ENCODE measurements at regions of chr4 and their contacts with region 1.

Region 1: GRCh38 chr4:142846729-142847596 is 862 bp upstream of the INPP4B start:
- DNase-seq: peak; percentile 89
- ATAC-seq: peak; percentile 82
- H3K4me3 Mint-ChIP-seq: peak overlapping the region; percentile 91
- H3K27ac Mint-ChIP-seq: peak overlapping the region; percentile 85
- H3K4me1 Mint-ChIP-seq: peaks cover 17% of the 10 kb centered on the region
- H3K27me3 Mint-ChIP-seq: peaks cover 6% of the 10 kb centered on the region

Region 2: GRCh38 chr4:141158219-141158618 is 1688.7 kb before region 1 on chr4:
- CTCF ChIA-PET with region 1: no interaction called
- POLR2A ChIA-PET with region 1: no interaction called
- intact Hi-C with region 1: loop called in 1 of 2 experiments (anchors 2 kb)
- DNase-seq: no peak
- ATAC-seq: no peak
- H3K4me3 Mint-ChIP-seq: no peak overlapping the region
- H3K27ac Mint-ChIP-seq: no peak overlapping the region
- H3K4me1 Mint-ChIP-seq: no peaks in the 10 kb centered on the region
- H3K27me3 Mint-ChIP-seq: peaks cover 3% of the 10 kb centered on the region

Region 3: DNA sequence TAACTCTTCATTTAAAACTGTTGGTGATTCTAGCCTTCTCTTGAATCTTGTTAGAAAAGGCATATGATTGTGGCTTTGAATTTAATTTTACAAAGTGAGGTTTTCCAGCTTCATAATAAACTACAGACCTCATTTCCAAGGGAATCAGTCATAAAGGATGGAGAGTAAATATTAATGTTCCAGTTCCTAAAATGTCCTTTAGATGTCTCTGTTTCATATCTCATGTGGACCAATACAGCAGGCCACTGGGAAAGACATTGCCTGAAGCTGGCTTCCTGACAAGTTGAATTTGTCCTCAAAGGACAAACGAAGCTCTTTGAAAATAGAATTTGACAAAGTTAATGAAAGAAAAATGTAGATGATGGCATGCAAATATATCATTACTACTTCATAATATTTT is 1500.8 kb before region 1 on chr4:
- CTCF ChIA-PET with region 1: no interaction called
- POLR2A ChIA-PET with region 1: no interaction called
- intact Hi-C with region 1: loop called (anchors 5 kb)
- DNase-seq: no peak
- ATAC-seq: no peak
- H3K4me3 Mint-ChIP-seq: no peak overlapping the region
- H3K27ac Mint-ChIP-seq: no peak overlapping the region
- H3K4me1 Mint-ChIP-seq: no peaks in the 10 kb centered on the region
- H3K27me3 Mint-ChIP-seq: peaks cover 12% of the 10 kb centered on the region

Region 4: GRCh38 chr4:141860974-141861373 is 986.0 kb before region 1 on chr4:
- CTCF ChIA-PET with region 1: no interaction called
- POLR2A ChIA-PET with region 1: no interaction called
- intact Hi-C with region 1: loop called in 1 of 2 experiments (anchors 2 kb)
- DNase-seq: no peak
- ATAC-seq: no peak
- H3K4me3 Mint-ChIP-seq: no peak overlapping the region
- H3K27ac Mint-ChIP-seq: no peak overlapping the region
- H3K4me1 Mint-ChIP-seq: no peaks in the 10 kb centered on the region
- H3K27me3 Mint-ChIP-seq: peaks cover 1% of the 10 kb centered on the region

Region 5: GRCh38 chr4:142282870-142283431 is 564.0 kb before region 1 on chr4:
- CTCF ChIA-PET with region 1: interaction called, 3 read pairs
- POLR2A ChIA-PET with region 1: no interaction called
- intact Hi-C with region 1: loop called (anchors 5 to 10 kb)
- DNase-seq: no peak
- ATAC-seq: no peak
- H3K4me3 Mint-ChIP-seq: no peak overlapping the region
- H3K27ac Mint-ChIP-seq: no peak overlapping the region
- H3K4me1 Mint-ChIP-seq: peaks cover 23% of the 10 kb centered on the region
- H3K27me3 Mint-ChIP-seq: no peaks in the 10 kb centered on the region

Region 6: GRCh38 chr4:142719854-142720541 is 127.0 kb before region 1 on chr4:
- CTCF ChIA-PET with region 1: no interaction called
- POLR2A ChIA-PET with region 1: no interaction called
- intact Hi-C with region 1: loop called (anchors 2 to 5 kb)
- DNase-seq: no peak
- ATAC-seq: peak; percentile 70
- H3K4me3 Mint-ChIP-seq: no peak overlapping the region
- H3K27ac Mint-ChIP-seq: peak overlapping the region; percentile 47
- H3K4me1 Mint-ChIP-seq: peaks cover 34% of the 10 kb centered on the region
- H3K27me3 Mint-ChIP-seq: no peaks in the 10 kb centered on the region

Region 7: DNA sequence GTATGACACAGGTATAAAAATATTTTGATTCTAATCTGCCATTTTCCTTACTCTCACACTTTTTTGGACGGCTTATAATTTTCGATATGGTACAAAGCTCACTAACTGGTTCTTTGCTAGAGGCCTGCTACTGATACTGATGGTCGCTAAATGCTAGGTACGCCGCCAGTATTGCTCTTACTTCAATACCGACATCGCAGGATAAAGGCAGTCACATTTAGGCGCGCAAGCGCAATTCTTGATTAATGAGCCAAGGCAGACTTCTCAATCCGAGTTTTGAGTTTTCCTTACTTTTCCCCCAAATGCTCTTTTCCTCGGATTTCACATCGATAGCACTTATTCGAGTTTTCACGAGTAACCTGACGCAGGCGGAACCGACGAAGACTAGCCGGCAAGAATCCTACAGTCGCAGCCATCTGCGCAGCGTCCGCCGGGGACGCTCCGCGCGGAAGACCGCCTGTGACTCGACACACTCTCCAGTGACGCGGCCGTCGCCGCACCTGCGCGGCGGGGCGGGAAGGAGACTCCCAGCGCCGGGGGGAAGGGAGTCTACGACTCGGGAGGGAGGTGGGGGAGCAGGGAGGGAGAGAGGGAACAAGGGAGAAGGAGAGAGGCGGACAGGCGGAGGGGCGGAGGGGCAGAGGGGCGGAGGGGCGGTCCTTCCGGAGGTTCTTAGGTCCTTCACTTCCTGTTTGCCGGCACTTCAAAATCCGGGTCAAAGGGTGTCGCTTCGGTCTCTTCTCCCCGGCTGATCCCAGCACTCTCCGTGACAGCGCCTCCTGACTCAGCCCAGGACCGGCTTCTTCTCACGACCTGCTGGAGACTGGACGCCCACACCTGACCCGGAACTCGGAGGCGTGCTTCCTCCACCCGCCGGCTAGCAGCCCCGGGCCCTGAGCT is 337.5 kb after region 1 on chr4 and contains the start of gene USP38:
- CTCF ChIA-PET with region 1: no interaction called
- POLR2A ChIA-PET with region 1: no interaction called
- intact Hi-C with region 1: loop called in 1 of 2 experiments (anchors 1 kb)
- DNase-seq: peak; percentile 95
- ATAC-seq: peak; percentile 90
- H3K4me3 Mint-ChIP-seq: peak within 1 kb of the TSS; percentile 85
- H3K27ac Mint-ChIP-seq: peak within 1 kb of the TSS; percentile 97
- H3K4me1 Mint-ChIP-seq: peaks cover 38% of the 10 kb centered on the region
- H3K27me3 Mint-ChIP-seq: no peaks in the 10 kb centered on the region
- total RNA-seq, gene USP38: 17.4 to 20.0 TPM